ENCODE measurements at regions of chr1 and their contacts with region 1.

Region 1: DNA sequence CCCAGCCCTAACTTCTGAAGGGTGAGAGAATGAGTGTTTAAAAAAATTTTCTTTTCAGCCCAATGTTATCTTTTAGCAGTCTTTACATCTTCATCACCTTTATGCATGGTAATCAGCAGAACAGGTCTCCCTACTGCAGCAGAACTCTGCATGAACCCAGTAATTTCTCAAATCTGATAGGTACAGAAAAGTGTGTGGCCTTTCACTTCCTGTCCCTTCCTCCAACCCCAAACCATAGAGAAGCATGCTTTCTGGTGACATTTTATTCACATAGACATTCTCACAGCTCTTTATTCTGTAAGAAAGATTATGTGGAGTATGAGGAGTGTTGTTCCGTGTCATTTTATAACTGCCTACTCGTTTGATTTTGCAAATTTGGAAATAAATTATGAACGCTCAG is 68.6 kb downstream of the RPAP2 start:
- DNase-seq: no peak
- H3K4me3 Mint-ChIP-seq: peak overlapping the region; percentile 22
- H3K27ac Mint-ChIP-seq: peak overlapping the region; percentile 44
- H3K4me1 Mint-ChIP-seq: peaks cover 61% of the 10 kb centered on the region
- H3K27me3 Mint-ChIP-seq: no peaks in the 10 kb centered on the region

Region 2: GRCh38 chr1:92317836-92318493 is 49.5 kb before region 1 on chr1:
- intact Hi-C with region 1: loop called (anchors 1 kb)
- DNase-seq: peak; percentile 23
- H3K4me3 Mint-ChIP-seq: peak overlapping the region; percentile 49
- H3K27ac Mint-ChIP-seq: peak overlapping the region; percentile 72
- H3K4me1 Mint-ChIP-seq: peaks cover 55% of the 10 kb centered on the region
- H3K27me3 Mint-ChIP-seq: no peaks in the 10 kb centered on the region

Region 3: GRCh38 chr1:92411511-92411910 is 44.0 kb after region 1 on chr1:
- intact Hi-C with region 1: loop called (anchors 5 kb)
- DNase-seq: no peak
- H3K4me3 Mint-ChIP-seq: no peak overlapping the region
- H3K27ac Mint-ChIP-seq: peak overlapping the region; percentile 46
- H3K4me1 Mint-ChIP-seq: peaks cover 40% of the 10 kb centered on the region
- H3K27me3 Mint-ChIP-seq: no peaks in the 10 kb centered on the region

Region 4: DNA sequence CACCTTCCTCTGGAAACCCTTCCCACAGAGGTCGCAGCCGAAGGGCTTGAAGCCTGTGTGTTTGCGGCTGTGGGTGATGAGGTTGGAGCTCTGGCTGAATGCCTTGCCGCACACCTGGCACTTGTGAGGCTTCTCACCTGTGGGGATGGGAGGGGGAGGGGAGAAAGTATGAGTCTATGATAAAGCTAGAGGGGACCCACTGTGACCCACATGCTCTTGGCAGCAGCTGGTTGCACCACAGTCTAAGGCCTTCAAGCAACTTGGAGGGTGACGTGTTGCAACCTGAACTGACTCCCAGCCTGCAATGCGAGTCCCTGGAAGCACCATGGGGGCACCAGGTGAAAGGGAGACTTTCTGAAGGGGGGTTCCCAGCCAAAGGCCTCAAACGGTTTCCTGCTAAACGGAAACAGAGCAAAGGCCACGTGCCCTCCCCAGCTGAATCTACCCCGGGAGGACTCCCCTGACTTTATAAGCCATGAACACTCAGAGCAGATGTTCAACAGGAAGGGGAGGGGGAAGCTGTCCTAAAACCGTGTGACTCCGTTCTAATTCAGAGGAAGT is 108.7 kb after region 1 on chr1:
- intact Hi-C with region 1: loop called (anchors 2 kb)
- DNase-seq: peak; percentile 62
- H3K4me3 Mint-ChIP-seq: peak overlapping the region; percentile 70
- H3K27ac Mint-ChIP-seq: peak overlapping the region; percentile 91
- H3K4me1 Mint-ChIP-seq: peaks cover 78% of the 10 kb centered on the region
- H3K27me3 Mint-ChIP-seq: no peaks in the 10 kb centered on the region

Region 5: GRCh38 chr1:92583821-92584760 is 216.6 kb after region 1 on chr1:
- intact Hi-C with region 1: loop called (anchors 5 kb)
- DNase-seq: no peak
- H3K4me3 Mint-ChIP-seq: peak overlapping the region; percentile 55
- H3K27ac Mint-ChIP-seq: peak overlapping the region; percentile 88
- H3K4me1 Mint-ChIP-seq: peaks cover 60% of the 10 kb centered on the region
- H3K27me3 Mint-ChIP-seq: no peaks in the 10 kb centered on the region

Region 6: DNA sequence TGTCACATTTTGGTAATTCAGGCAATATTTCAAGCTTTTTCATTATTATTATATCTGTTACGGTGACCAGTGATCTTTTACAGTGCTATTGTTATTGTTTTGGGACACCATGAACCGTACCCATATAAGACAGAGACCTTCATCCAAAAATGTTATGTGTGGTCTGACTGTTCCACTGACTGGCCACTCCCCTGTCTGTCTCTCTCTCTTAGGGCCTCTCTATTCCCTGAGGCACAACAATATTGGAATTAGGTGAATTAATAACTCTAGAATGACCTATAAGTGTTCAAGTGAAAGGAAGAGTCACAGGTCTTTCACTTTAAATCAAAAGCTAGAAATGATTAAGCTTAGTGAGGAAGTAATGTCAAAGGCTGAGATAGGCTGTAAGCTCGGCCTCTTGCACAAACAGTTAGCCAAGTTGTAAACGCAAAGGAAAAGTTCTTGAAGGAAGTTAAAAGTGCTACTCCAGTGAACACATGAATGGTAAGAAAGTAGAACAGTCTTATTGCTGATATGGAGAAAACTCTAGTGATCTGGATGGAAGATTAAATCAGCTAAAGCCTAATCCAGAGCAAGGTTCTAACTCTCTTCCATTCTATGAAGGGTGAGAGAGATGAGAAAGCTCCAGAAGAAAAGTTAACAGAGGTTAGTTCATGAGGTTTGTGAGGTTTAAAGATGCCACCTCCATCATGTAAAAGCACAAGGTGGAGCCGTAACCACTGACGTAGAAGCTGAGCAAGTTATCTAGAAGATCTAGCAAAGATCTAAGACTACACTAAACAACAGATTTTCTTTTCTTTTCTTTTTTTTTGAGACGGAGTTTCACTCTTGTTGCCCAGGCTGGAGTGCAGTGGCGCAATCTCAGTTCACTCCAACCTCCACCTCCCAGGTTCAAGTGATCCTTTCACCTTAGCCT is 613.5 kb after region 1 on chr1:
- intact Hi-C with region 1: loop called (anchors 10 kb)
- DNase-seq: peak; percentile 45
- H3K4me3 Mint-ChIP-seq: peak overlapping the region; percentile 41
- H3K27ac Mint-ChIP-seq: peak overlapping the region; percentile 98
- H3K4me1 Mint-ChIP-seq: peaks cover 55% of the 10 kb centered on the region
- H3K27me3 Mint-ChIP-seq: no peaks in the 10 kb centered on the region

Measured in activated T-helper 2 cell treated with anti-CD3 and anti-CD28 coated beads, Interferon-gamma antibody, Interleukin-2, Interleukin-4, amounts not matched to agents 10 μg/mL and 5 μg/mL and 100 μg/mL, durations not matched to agents 14 hours and 24 hours and 36 hours (primary cell).